Astrocyte of the cerebellum (primary cell): ENCODE measurements at regions of chr14 and their contacts with region 1.

Region 1: DNA sequence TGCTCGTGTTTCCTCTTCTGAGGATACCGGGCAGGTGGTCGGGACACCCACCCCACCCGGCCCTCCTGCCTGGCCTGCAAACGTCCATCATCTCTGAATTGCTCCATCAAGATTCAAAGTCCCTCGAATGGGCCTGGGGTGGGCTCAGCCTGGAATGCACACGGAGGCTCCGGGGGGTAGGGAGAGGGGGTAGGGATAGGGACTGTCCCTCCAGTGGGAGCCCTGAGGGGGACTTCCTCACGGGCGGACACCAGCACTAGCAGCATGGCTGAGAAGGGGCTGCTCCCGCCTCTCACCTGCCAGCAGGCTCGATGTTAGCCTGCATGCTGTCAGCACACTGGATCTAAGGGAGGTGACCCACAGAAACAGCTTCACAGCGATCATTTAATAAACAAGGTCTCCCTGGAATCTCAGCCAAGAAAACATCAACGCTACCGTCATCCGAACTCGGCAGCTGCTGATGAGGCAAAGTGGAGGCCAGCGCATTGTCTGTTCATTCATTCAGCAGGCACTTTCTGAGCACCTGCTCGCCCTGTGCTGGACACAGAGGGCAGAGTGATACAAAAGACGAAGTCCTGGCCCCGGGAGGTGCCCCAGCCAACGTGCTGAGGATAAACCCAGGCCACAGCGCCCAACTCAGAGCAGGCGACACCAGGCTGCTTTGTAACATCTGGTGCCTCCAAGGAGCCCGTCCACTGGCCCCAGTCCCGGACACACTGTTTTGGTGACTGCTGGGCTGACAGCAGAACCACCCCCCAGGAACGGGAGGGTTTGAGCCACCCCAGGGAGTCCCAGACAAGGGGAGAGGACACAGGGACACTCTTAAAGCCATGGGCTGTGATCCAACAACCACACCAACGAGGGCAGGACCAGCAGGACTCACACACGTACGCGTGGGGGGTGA is 6.3 kb downstream of the TMEM179 start:
- DNase-seq: no peak
- H3K4me3 ChIP-seq: no peak overlapping the region
- CTCF ChIP-seq: no peak

Region 2: GRCh38 chr14:104149617-104150135 is 448.6 kb before region 1 on chr14:
- in situ Hi-C with region 1: loop called (anchors 10 kb)
- DNase-seq: peak; percentile 24
- H3K4me3 ChIP-seq: no peak overlapping the region
- CTCF ChIP-seq: no peak

Region 3: GRCh38 chr14:104196461-104197140 is 401.7 kb before region 1 on chr14:
- in situ Hi-C with region 1: loop called (anchors 10 kb)
- DNase-seq: no peak
- H3K4me3 ChIP-seq: no peak overlapping the region
- CTCF ChIP-seq: no peak

Region 4: GRCh38 chr14:104563742-104564615 is 34.3 kb before region 1 on chr14:
- in situ Hi-C with region 1: no loop called
- DNase-seq: no peak
- H3K4me3 ChIP-seq: no peak overlapping the region
- CTCF ChIP-seq: peak; percentile 76